CD8-positive, alpha-beta memory T cell (primary cell): ENCODE measurements at regions of chr16 and their contacts with region 1.

Region 1: GRCh38 chr16:71883849-71884638 is at the start of gene ZNF821:
- DNase-seq: peak; percentile 74 to 81 (median 78)
- H3K4me3 ChIP-seq: peak within 1 kb of the TSS; percentile 77
- H3K4me3 Mint-ChIP-seq: peak within 1 kb of the TSS; percentile 92 to 99 (median 96)
- H3K27ac ChIP-seq: peak within 1 kb of the TSS; percentile 68
- H3K27ac Mint-ChIP-seq: peak within 1 kb of the TSS; percentile 94 to 98 (median 96)
- H3K4me1 ChIP-seq: peaks cover 37% of the 10 kb centered on the region
- H3K4me1 Mint-ChIP-seq: peaks cover 49 to 57% (median 54%) of the 10 kb centered on the region in 3 donors
- H3K27me3 ChIP-seq: no peaks in the 10 kb centered on the region
- H3K27me3 Mint-ChIP-seq: peaks cover 0 to 4% of the 10 kb centered on the region in 2 donors
- total RNA-seq, gene ZNF821: 3.3 to 5.3 TPM

Region 2: DNA sequence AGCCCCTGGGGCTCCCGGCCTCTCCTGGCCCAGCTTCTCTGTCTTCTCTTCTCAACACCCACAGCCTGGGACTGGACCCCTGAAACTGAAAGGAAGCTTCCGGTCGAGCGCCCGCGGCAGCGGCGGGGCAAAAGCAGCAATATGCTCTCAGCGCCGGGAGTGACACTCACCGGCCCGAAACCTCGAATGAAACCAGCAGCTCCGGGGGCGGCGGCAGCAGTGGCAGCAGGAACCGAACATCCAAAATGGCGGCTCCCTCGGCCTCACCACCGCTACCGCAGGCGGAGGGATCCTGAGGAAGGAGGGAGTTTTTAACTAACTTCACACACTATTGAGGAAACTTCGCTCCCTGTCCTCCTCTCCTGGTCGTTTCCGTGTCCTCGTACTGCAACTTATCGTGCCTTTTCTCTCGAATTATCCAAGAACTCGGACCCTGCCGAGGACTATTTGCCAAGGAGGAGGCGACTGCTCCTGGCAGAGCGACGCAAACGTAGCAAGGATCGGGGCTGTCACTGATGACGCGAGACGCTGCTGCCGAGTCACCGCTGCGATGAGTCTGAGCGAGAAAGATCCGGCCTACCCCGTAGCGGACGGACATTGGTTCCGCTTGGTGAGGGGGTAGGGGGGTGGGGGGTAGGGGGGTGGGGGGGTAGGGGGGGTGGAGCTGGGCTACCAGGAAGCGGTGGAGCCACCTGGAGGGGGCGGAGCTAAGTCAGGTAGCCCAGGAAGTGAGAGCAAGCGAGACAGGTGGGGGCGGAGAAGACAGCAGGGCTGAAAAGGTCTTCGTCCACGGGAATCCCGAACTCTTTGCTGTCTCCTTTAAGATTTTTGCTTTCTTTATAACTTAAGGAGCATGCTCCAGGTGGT is 75.2 kb before region 1 on chr16 and contains the start of gene AP1G1:
- CTCF ChIA-PET with region 1: interaction called, 44 read pairs
- POLR2A ChIA-PET with region 1: interaction called, 43 read pairs
- DNase-seq: peak; percentile 88 to 98 (median 93)
- H3K4me3 ChIP-seq: peak within 1 kb of the TSS; percentile 90
- H3K4me3 Mint-ChIP-seq: peak within 1 kb of the TSS; percentile 90 to 100 (median 95)
- H3K27ac ChIP-seq: peak within 1 kb of the TSS; percentile 97
- H3K27ac Mint-ChIP-seq: peak within 1 kb of the TSS; percentile 97 to 100 (median 100)
- H3K4me1 ChIP-seq: peaks cover 30% of the 10 kb centered on the region
- H3K4me1 Mint-ChIP-seq: peaks cover 24 to 57% (median 38%) of the 10 kb centered on the region in 3 donors
- H3K27me3 ChIP-seq: no peaks in the 10 kb centered on the region
- H3K27me3 Mint-ChIP-seq: peaks cover 0 to 5% of the 10 kb centered on the region in 2 donors
- total RNA-seq, gene AP1G1: 80.4 to 83.3 TPM

Region 3: GRCh38 chr16:71845639-71846430 is 38.2 kb before region 1 on chr16 and contains the start of gene ATXN1L:
- CTCF ChIA-PET with region 1: interaction called, 22 read pairs
- POLR2A ChIA-PET with region 1: interaction called, 19 read pairs
- DNase-seq: peak; percentile 88 to 95 (median 92)
- H3K4me3 ChIP-seq: peak within 1 kb of the TSS; percentile 97
- H3K4me3 Mint-ChIP-seq: peak within 1 kb of the TSS; percentile 91 to 97 (median 94)
- H3K27ac ChIP-seq: peak within 1 kb of the TSS; percentile 90
- H3K27ac Mint-ChIP-seq: peak within 1 kb of the TSS; percentile 91 to 98 (median 96)
- H3K4me1 ChIP-seq: peaks cover 17% of the 10 kb centered on the region
- H3K4me1 Mint-ChIP-seq: peaks cover 34 to 50% (median 43%) of the 10 kb centered on the region in 3 donors
- H3K27me3 ChIP-seq: no peaks in the 10 kb centered on the region
- H3K27me3 Mint-ChIP-seq: no peaks in the 10 kb centered on the region
- total RNA-seq, gene ATXN1L: 16.9 to 19.7 TPM

Region 4: GRCh38 chr16:71867939-71868338 is 16.1 kb before region 1 on chr16:
- CTCF ChIA-PET with region 1: interaction called, 31 read pairs
- POLR2A ChIA-PET with region 1: interaction called, 4 read pairs
- DNase-seq: no peak
- H3K4me3 ChIP-seq: no peak overlapping the region
- H3K4me3 Mint-ChIP-seq: no peak overlapping the region
- H3K27ac ChIP-seq: no peak overlapping the region
- H3K27ac Mint-ChIP-seq: peak overlapping the region in 1 of 8 donors; percentile 24
- H3K4me1 ChIP-seq: peaks cover 6% of the 10 kb centered on the region
- H3K4me1 Mint-ChIP-seq: peaks cover 11 to 33% (median 19%) of the 10 kb centered on the region in 3 donors
- H3K27me3 ChIP-seq: no peaks in the 10 kb centered on the region
- H3K27me3 Mint-ChIP-seq: no peaks in the 10 kb centered on the region

Region 5: GRCh38 chr16:71903608-71904007 is 19.6 kb after region 1 on chr16:
- CTCF ChIA-PET with region 1: interaction called, 123 read pairs
- POLR2A ChIA-PET with region 1: interaction called, 4 read pairs
- DNase-seq: no peak
- H3K4me3 ChIP-seq: no peak overlapping the region
- H3K4me3 Mint-ChIP-seq: peak overlapping the region in 5 of 7 donors; percentile 6 to 61 (median 39)
- H3K27ac ChIP-seq: no peak overlapping the region
- H3K27ac Mint-ChIP-seq: peak overlapping the region; percentile 6 to 84 (median 43)
- H3K4me1 ChIP-seq: peaks cover 69% of the 10 kb centered on the region
- H3K4me1 Mint-ChIP-seq: peaks cover 73 to 93% (median 90%) of the 10 kb centered on the region in 3 donors
- H3K27me3 ChIP-seq: no peaks in the 10 kb centered on the region
- H3K27me3 Mint-ChIP-seq: no peaks in the 10 kb centered on the region